ENCODE measurements at regions of chr15 and their contacts with region 1.

Region 1: GRCh38 chr15:100602064-100602822 is at the starts of genes ASB7 and LINS1:
- DNase-seq: peak; percentile 100
- H3K4me3 ChIP-seq: peak within 1 kb of the TSS; percentile 89 to 97 (median 97)
- H3K4me3 Mint-ChIP-seq: no peak within 1 kb of the TSS
- H3K27ac ChIP-seq: peak within 1 kb of the TSS; percentile 68 to 86
- H3K27ac Mint-ChIP-seq: peak within 1 kb of the TSS in 6 of 7 donors; percentile 50 to 97 (median 92)
- H3K4me1 ChIP-seq: peaks cover 18 to 38% of the 10 kb centered on the region in 2 donors
- H3K4me1 Mint-ChIP-seq: peaks cover 26% of the 10 kb centered on the region
- H3K27me3 ChIP-seq: no peaks in the 10 kb centered on the region
- H3K27me3 Mint-ChIP-seq: peaks cover 0 to 1% (median 0%) of the 10 kb centered on the region in 3 donors
- CTCF ChIP-seq: no peak
- polyA plus RNA-seq, gene ASB7: 5.3 to 9.8 (median 7.6) TPM
- polyA plus RNA-seq, gene LINS1: 4.2 to 8.8 (median 7.6) TPM

Region 2: GRCh38 chr15:100572362-100572983 is 29.8 kb before region 1 on chr15:
- intact Hi-C with region 1: no loop called
- DNase-seq: peak in 2 of 3 donors; percentile 3 to 62
- H3K4me3 ChIP-seq: no peak overlapping the region
- H3K4me3 Mint-ChIP-seq: no peak overlapping the region
- H3K27ac ChIP-seq: no peak overlapping the region
- H3K27ac Mint-ChIP-seq: no peak overlapping the region
- H3K4me1 ChIP-seq: no peaks in the 10 kb centered on the region
- H3K4me1 Mint-ChIP-seq: no peaks in the 10 kb centered on the region
- H3K27me3 ChIP-seq: no peaks in the 10 kb centered on the region
- H3K27me3 Mint-ChIP-seq: no peaks in the 10 kb centered on the region
- CTCF ChIP-seq: peak; percentile 88

Region 3: DNA sequence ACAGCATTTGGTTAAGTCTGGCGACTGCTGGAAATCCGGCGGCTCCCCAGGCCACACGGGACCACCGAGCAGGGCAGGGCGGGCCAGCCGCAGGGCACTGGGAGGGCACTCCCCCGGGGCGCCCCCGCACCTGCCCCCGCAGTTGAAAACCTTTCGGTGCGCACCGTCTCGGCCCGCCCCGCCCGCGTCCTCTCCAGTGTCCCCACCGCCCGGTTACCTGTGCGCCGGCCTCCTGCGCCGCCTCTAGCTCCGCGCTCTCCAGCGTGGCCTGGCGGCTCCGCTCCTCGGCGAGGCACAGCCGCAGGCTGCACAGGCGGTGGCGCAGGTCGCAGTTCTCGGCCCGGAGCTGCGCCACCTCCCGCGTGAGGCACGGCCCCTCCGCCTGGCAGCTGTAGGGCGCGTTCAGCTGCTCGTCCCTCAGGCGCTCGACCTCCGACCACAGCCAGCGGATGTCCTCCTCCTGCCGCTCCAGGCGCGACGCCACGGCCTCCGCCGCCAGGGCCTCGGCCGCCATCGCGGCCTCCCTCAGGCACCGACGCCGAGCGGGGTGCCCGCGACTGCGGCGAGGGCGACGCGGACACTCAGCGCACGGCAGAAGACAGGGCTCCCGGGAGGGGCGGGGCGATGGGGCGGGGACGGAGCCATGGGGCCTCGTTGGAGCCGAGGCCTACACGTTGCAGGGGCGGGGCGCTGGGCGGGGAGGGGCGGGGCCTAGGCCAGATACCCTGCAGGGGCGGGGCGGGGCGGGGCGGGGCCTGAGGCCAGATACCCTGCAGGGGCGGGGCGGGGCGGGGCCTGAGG is 1121.8 kb after region 1 on chr15 and contains the start of gene TARS3:
- intact Hi-C with region 1: loop called in 1 of 2 experiments (anchors 10 kb)
- DNase-seq: peak; percentile 89 to 93 (median 90)
- H3K4me3 ChIP-seq: peak within 1 kb of the TSS; percentile 42 to 81 (median 75)
- H3K4me3 Mint-ChIP-seq: peak within 1 kb of the TSS; percentile 74 to 94
- H3K27ac ChIP-seq: peak within 1 kb of the TSS; percentile 42 to 80
- H3K27ac Mint-ChIP-seq: peak within 1 kb of the TSS in 5 of 7 donors; percentile 11 to 90 (median 64)
- H3K4me1 ChIP-seq: peaks cover 13 to 14% of the 10 kb centered on the region in 2 donors
- H3K4me1 Mint-ChIP-seq: peaks cover 15% of the 10 kb centered on the region
- H3K27me3 ChIP-seq: peaks cover 0 to 2% of the 10 kb centered on the region in 2 donors
- H3K27me3 Mint-ChIP-seq: peaks cover 0 to 3% (median 2%) of the 10 kb centered on the region in 3 donors
- CTCF ChIP-seq: no peak
- polyA plus RNA-seq, gene TARS3: 1.3 to 2.4 (median 1.8) TPM

Measured in CD14-positive monocyte (primary cell).